PC-9 (cell line): ENCODE measurements at regions of chr4 and their contacts with region 1.

Region 1: GRCh38 chr4:3135155-3136011 is 60.9 kb downstream of the HTT start:
- DNase-seq: no peak
- H3K4me3 ChIP-seq: no peak overlapping the region
- H3K27ac ChIP-seq: no peak overlapping the region
- H3K4me1 ChIP-seq: no peaks in the 10 kb centered on the region
- H3K27me3 ChIP-seq: no peaks in the 10 kb centered on the region
- CTCF ChIP-seq: no peak

Region 2: GRCh38 chr4:3009422-3009821 is 126.0 kb before region 1 on chr4:
- CTCF ChIA-PET with region 1: interaction called, 12 read pairs
- POLR2A ChIA-PET with region 1: no interaction called
- intact Hi-C with region 1: no loop called
- DNase-seq: no peak
- H3K4me3 ChIP-seq: no peak overlapping the region
- H3K27ac ChIP-seq: no peak overlapping the region
- H3K4me1 ChIP-seq: peaks cover 17% of the 10 kb centered on the region; the same call in 1 of the 2 replicates
- H3K27me3 ChIP-seq: no peaks in the 10 kb centered on the region
- CTCF ChIP-seq: no peak; the same call in 1 of the 2 replicates

Region 3: GRCh38 chr4:3179126-3179706 is 43.8 kb after region 1 on chr4:
- CTCF ChIA-PET with region 1: no interaction called
- POLR2A ChIA-PET with region 1: no interaction called
- intact Hi-C with region 1: no loop called
- DNase-seq: no peak
- H3K4me3 ChIP-seq: no peak overlapping the region
- H3K27ac ChIP-seq: no peak overlapping the region
- H3K4me1 ChIP-seq: no peaks in the 10 kb centered on the region
- H3K27me3 ChIP-seq: no peaks in the 10 kb centered on the region
- CTCF ChIP-seq: no peak